GM12878 (cell line): ENCODE measurements at regions of chr12 and their contacts with region 1.

Region 1: GRCh38 chr12:32522331-32523221 is 123.2 kb downstream of the FGD4 start:
- DNase-seq: peak; percentile 9
- ATAC-seq: peak; percentile 79
- H3K4me3 ChIP-seq: no peak overlapping the region
- H3K27ac ChIP-seq: no peak overlapping the region
- H3K4me1 ChIP-seq: peaks cover 13% of the 10 kb centered on the region
- H3K27me3 ChIP-seq: no peaks in the 10 kb centered on the region
- CTCF ChIP-seq: no peak
- EP300 ChIP-seq: no peak
- POLR2A ChIP-seq: no peak
- RAD21 ChIP-seq: no peak

Region 2: DNA sequence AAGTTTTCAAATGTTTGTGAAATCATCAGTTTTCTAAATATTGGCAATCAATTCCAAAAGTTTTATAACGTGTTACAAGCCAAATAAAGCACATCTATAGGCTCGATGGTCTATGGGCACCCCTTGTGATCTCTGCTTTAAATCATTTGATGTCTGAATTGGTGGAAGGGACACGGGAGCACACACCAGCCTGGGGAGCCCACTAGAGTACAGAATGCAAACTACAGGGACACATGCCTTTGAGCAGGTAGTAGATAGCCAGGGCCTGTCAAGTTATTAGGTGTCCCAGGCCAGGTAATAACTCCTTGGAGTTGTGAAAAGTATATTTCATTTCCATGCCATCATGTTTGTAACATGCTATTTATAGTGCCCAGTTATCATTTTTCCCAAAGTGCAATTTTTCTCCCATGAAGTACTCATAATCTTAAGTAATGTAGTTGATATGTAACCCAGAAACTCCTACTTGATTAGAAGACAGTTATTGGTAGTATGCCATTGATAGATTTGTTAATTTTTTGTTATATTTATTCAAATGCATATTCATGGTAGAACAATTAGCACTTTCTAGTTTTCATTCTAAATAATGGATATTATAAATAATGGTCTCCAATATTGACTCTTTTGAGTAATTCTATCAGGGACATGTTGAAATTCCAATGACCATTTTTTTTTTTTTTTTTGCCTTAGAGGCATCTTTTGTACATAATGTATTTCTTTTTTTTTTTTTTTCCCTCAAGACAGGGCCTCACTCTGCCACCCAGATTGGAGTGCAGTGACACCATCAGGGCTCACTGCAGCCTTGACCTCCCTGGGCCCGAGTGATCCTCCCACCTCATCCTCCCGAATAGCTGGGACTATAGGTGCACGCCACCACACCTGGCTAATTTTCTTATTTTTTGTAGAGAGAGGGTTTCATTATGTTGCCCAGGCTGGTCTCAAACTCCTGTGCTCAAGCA is 220.1 kb before region 1 on chr12:
- CTCF ChIA-PET with region 1: no interaction called
- POLR2A ChIA-PET with region 1: no interaction called
- RAD21 ChIA-PET with region 1: no interaction called
- SMC1A ChIA-PET with region 1: no interaction called
- in situ Hi-C with region 1: no loop called
- intact Hi-C with region 1: no loop called
- DNase-seq: peak; percentile 63
- ATAC-seq: peak; percentile 100
- H3K4me3 ChIP-seq: no peak overlapping the region
- H3K27ac ChIP-seq: peak overlapping the region; percentile 69
- H3K4me1 ChIP-seq: peaks cover 9% of the 10 kb centered on the region
- H3K27me3 ChIP-seq: no peaks in the 10 kb centered on the region
- CTCF ChIP-seq: peak; percentile 90 to 91 (median 91)
- EP300 ChIP-seq: no peak
- POLR2A ChIP-seq: no peak
- RAD21 ChIP-seq: peak; percentile 97

Region 3: GRCh38 chr12:32322354-32322753 is 200.2 kb before region 1 on chr12:
- CTCF ChIA-PET with region 1: no interaction called
- POLR2A ChIA-PET with region 1: no interaction called
- RAD21 ChIA-PET with region 1: no interaction called
- SMC1A ChIA-PET with region 1: no interaction called
- in situ Hi-C with region 1: no loop called
- intact Hi-C with region 1: no loop called
- DNase-seq: no peak
- ATAC-seq: no peak
- H3K4me3 ChIP-seq: no peak overlapping the region
- H3K27ac ChIP-seq: no peak overlapping the region
- H3K4me1 ChIP-seq: no peaks in the 10 kb centered on the region
- H3K27me3 ChIP-seq: no peaks in the 10 kb centered on the region
- CTCF ChIP-seq: no peak
- EP300 ChIP-seq: no peak
- POLR2A ChIP-seq: no peak
- RAD21 ChIP-seq: no peak

Region 4: GRCh38 chr12:32533971-32534590 is 11.5 kb after region 1 on chr12:
- CTCF ChIA-PET with region 1: no interaction called
- POLR2A ChIA-PET with region 1: interaction called, 3 read pairs
- RAD21 ChIA-PET with region 1: no interaction called
- SMC1A ChIA-PET with region 1: interaction called, 11 read pairs
- in situ Hi-C with region 1: no loop called
- intact Hi-C with region 1: no loop called
- DNase-seq: no peak
- ATAC-seq: peak; percentile 70
- H3K4me3 ChIP-seq: no peak overlapping the region
- H3K27ac ChIP-seq: no peak overlapping the region
- H3K4me1 ChIP-seq: no peaks in the 10 kb centered on the region
- H3K27me3 ChIP-seq: no peaks in the 10 kb centered on the region; a peak in 2 of 4 replicates
- CTCF ChIP-seq: no peak
- EP300 ChIP-seq: no peak
- POLR2A ChIP-seq: no peak
- RAD21 ChIP-seq: no peak

Region 5: DNA sequence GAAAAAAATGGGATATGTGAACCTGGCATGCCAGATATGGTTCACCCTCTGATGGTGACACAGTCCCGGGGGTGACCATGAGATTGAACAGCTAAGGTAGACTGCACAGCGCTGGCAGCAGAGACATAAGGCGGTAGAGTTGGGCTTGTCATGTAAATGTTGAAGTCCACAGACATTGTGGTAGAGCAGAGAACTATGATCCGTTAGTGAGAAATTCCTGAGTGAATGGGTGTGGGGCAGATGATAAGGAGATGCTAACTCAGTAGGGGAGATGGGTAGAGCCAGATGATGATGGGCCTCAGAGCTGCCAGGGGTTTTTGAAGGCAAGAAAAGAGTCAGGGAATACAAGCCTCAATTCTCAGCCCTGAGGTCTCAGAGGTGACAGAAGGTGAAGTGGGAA is 105.4 kb after region 1 on chr12:
- CTCF ChIA-PET with region 1: no interaction called
- POLR2A ChIA-PET with region 1: no interaction called
- RAD21 ChIA-PET with region 1: no interaction called
- SMC1A ChIA-PET with region 1: no interaction called
- in situ Hi-C with region 1: no loop called
- intact Hi-C with region 1: no loop called
- DNase-seq: no peak
- ATAC-seq: no peak
- H3K4me3 ChIP-seq: no peak overlapping the region
- H3K27ac ChIP-seq: no peak overlapping the region
- H3K4me1 ChIP-seq: no peaks in the 10 kb centered on the region
- H3K27me3 ChIP-seq: no peaks in the 10 kb centered on the region
- CTCF ChIP-seq: no peak
- EP300 ChIP-seq: no peak
- POLR2A ChIP-seq: no peak
- RAD21 ChIP-seq: no peak

Region 6: GRCh38 chr12:32692358-32692757 is 169.8 kb after region 1 on chr12:
- CTCF ChIA-PET with region 1: no interaction called
- POLR2A ChIA-PET with region 1: no interaction called
- RAD21 ChIA-PET with region 1: no interaction called
- SMC1A ChIA-PET with region 1: no interaction called
- in situ Hi-C with region 1: no loop called
- intact Hi-C with region 1: no loop called
- DNase-seq: no peak
- ATAC-seq: peak; percentile 42
- H3K4me3 ChIP-seq: no peak overlapping the region
- H3K27ac ChIP-seq: no peak overlapping the region
- H3K4me1 ChIP-seq: no peaks in the 10 kb centered on the region
- H3K27me3 ChIP-seq: no peaks in the 10 kb centered on the region
- CTCF ChIP-seq: no peak
- EP300 ChIP-seq: no peak
- POLR2A ChIP-seq: no peak
- RAD21 ChIP-seq: no peak